Posterior vena cava (tissue), 2 donors: ENCODE measurements at regions of chr20 and their contacts with region 1.

Region 1: GRCh38 chr20:5001174-5002076 is at the start of gene SLC23A2:
- DNase-seq: peak; percentile 85
- total RNA-seq, gene SLC23A2: 21.4 to 23.2 TPM

Region 2: DNA sequence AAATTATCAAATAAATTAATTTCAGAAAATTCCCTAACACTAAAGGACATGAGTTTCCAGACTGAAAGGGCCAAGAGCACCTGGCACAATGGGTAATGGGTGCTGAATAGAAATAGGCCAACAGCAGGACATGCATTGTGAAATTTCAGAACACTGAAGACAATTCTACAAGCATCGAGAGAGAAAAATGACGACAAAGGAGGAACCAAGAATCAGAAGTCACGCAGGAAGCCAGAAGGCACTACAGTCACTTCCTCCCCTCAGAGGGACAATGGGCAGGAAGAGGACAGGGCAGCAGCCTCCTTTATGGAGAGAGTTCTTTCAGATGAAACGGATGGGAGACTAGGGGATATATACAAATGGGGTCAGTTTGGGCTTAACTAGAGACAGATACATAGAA is 88.8 kb after region 1 on chr20:
- intact Hi-C with region 1: loop called in 1 of 2 experiments (anchors 10 kb)
- DNase-seq: no peak